MCF 10A (cell line): ENCODE measurements at regions of chr12 and their contacts with region 1.

Region 1: GRCh38 chr12:127667131-127667685 is 599.8 kb upstream of the TMEM132C start:
- DNase-seq: no peak
- H3K4me3 Mint-ChIP-seq: no peak overlapping the region
- H3K27ac Mint-ChIP-seq: no peak overlapping the region
- H3K4me1 Mint-ChIP-seq: no peaks in the 10 kb centered on the region
- H3K27me3 Mint-ChIP-seq: no peaks in the 10 kb centered on the region
- CTCF ChIP-seq: no peak

Region 2: DNA sequence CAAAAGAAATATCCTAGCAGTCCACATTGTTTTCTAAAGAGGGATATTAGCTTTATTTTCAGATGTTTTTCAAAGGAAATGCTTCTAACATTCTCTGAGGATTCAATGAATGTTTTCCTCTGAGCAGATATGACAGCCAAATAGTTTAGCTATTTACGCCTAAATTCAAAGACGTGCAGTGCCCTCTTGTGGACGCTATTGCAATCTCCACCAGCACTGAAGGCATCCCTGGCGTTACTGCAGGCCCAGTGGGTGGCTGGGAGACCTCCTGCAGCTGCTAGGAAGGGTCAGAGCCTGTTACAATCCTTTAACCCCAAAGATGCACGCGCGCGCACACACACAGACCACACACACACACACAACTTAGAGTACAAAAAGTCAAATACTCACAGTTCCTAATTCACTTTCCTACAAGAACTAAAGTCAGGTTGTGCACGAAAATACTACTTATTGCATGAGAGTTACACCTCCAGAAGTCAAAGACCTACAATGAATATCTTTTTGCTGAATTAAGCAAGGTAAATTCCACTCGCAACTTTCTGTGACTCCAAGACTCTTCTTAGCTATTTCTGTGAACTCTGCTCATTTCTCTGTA is 10.4 kb after region 1 on chr12:
- CTCF ChIA-PET with region 1: interaction called, 17 read pairs
- POLR2A ChIA-PET with region 1: no interaction called
- intact Hi-C with region 1: no loop called
- DNase-seq: peak; percentile 75
- H3K4me3 Mint-ChIP-seq: no peak overlapping the region
- H3K27ac Mint-ChIP-seq: no peak overlapping the region
- H3K4me1 Mint-ChIP-seq: no peaks in the 10 kb centered on the region
- H3K27me3 Mint-ChIP-seq: no peaks in the 10 kb centered on the region
- CTCF ChIP-seq: peak; percentile 53

Region 3: GRCh38 chr12:127785540-127785939 is 118.3 kb after region 1 on chr12:
- CTCF ChIA-PET with region 1: no interaction called
- POLR2A ChIA-PET with region 1: no interaction called
- intact Hi-C with region 1: no loop called
- DNase-seq: peak; percentile 22
- H3K4me3 Mint-ChIP-seq: no peak overlapping the region
- H3K27ac Mint-ChIP-seq: no peak overlapping the region
- H3K4me1 Mint-ChIP-seq: no peaks in the 10 kb centered on the region
- H3K27me3 Mint-ChIP-seq: no peaks in the 10 kb centered on the region
- CTCF ChIP-seq: no peak

Region 4: GRCh38 chr12:127987199-127987901 is 320.1 kb after region 1 on chr12:
- CTCF ChIA-PET with region 1: no interaction called
- POLR2A ChIA-PET with region 1: no interaction called
- intact Hi-C with region 1: no loop called
- DNase-seq: no peak
- H3K4me3 Mint-ChIP-seq: no peak overlapping the region
- H3K27ac Mint-ChIP-seq: no peak overlapping the region
- H3K4me1 Mint-ChIP-seq: no peaks in the 10 kb centered on the region
- H3K27me3 Mint-ChIP-seq: no peaks in the 10 kb centered on the region
- CTCF ChIP-seq: no peak